Motor neuron (in vitro differentiated cells): ENCODE measurements at regions of chr19 and their contacts with region 1.

Region 1: GRCh38 chr19:14577885-14578427 is 4.9 kb upstream of the CLEC17A start:
- ATAC-seq: peak in 1 of 8 experiments; percentile 31
- H3K4me3 ChIP-seq: no peak overlapping the region
- H3K27ac ChIP-seq: no peak overlapping the region
- H3K4me1 ChIP-seq: peaks cover 3 to 6% of the 10 kb centered on the region in 2 donors

Region 2: GRCh38 chr19:14890643-14891379 is 312.9 kb after region 1 on chr19:
- in situ Hi-C with region 1: loop called in 1 of 9 experiments (anchors 25 kb)
- ATAC-seq: no peak
- H3K4me3 ChIP-seq: no peak overlapping the region
- H3K27ac ChIP-seq: no peak overlapping the region
- H3K4me1 ChIP-seq: peaks cover 0 to 6% of the 10 kb centered on the region in 2 donors

Region 3: DNA sequence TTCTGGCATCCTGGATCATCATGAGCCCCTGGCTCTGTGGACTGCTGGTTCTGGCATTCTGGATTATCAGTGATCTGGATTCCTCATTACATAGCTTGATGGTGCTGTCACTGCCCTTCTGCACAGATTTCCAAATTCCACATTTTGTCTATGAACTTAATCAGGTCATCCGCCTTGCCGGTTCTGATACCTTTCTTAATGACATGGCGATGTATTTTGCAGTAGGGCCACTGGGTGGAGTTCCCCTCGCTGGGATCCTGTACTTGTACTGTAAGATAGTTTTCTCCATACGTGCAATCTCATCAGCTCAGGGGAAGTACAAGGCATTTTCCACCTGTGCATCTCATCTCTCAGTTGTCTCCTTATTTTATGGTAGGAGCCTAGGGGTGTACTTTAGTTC is 338.9 kb after region 1 on chr19:
- in situ Hi-C with region 1: loop called in 1 of 9 experiments (anchors 25 kb)
- ATAC-seq: no peak
- H3K4me3 ChIP-seq: no peak overlapping the region
- H3K27ac ChIP-seq: no peak overlapping the region
- H3K4me1 ChIP-seq: no peaks in the 10 kb centered on the region

Region 4: DNA sequence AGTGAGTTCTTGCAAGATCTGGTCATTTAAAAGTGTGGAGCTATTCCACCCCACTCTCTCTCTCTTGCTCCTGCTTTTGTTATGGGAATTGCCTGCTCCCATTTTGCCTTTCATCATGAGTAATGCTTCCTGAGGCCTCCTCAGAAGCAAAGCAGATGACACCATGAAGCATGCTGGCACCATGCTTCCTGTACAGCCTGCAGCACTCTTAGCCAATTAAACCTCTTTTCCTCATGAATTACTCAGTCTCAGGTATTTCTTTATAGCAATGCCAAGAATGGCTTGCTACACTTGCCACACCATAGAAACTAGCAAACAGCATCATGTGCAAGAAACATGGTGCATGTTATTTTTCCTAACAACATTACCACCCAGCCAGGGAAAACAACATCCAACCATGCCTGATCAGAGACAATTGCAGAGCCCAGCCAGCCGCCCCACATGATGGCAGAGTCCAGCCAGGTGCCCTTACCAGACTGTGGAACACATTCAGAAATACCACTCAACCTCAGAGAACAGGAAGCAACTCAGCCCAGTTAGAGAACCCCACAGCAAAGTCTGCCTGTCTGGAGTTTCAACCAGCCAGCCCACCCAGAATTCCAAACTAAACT is 566.2 kb after region 1 on chr19:
- in situ Hi-C with region 1: no loop called
- ATAC-seq: no peak
- H3K4me3 ChIP-seq: no peak overlapping the region
- H3K27ac ChIP-seq: no peak overlapping the region
- H3K4me1 ChIP-seq: no peaks in the 10 kb centered on the region